MCF 10A (cell line): ENCODE measurements at regions of chr6 and their contacts with region 1.

Region 1: DNA sequence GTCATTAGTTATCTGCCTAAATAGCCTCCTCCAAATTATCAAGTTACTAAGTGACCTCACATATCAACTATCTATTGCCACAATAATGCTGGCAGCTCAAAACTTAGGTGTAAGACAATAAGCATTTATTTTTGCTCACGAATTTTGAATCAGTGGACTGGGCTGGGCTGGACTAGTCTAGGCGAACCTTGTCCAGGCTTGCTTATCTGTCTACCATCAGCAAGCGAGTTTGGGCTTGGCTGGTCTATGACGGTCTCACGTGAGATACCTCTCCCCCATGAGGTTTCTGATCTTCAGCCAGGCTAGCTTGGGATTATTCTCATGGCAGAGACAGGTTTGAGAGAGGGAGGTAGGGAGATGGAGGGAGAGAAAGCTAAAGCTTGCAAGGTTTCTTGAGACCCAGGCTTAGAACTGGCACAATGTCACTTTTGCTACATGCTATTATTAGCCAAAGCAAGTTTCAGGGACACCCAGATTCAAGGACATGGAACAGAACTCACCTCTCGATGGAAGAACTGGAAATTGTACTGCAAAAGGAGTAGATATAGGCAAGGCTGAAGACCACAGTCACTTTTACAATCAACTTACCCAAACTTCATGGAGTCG is 80.9 kb downstream of the WASF1 start:
- DNase-seq: peak; percentile 92
- H3K4me3 Mint-ChIP-seq: peak overlapping the region; percentile 47
- H3K27ac Mint-ChIP-seq: peak overlapping the region; percentile 85
- H3K4me1 Mint-ChIP-seq: peaks cover 47% of the 10 kb centered on the region
- H3K27me3 Mint-ChIP-seq: no peaks in the 10 kb centered on the region
- CTCF ChIP-seq: no peak

Region 2: GRCh38 chr6:110083875-110084585 is 14.6 kb before region 1 on chr6:
- CTCF ChIA-PET with region 1: interaction called, 5 read pairs
- POLR2A ChIA-PET with region 1: interaction called, 23 read pairs
- intact Hi-C with region 1: no loop called
- DNase-seq: no peak
- H3K4me3 Mint-ChIP-seq: no peak overlapping the region
- H3K27ac Mint-ChIP-seq: no peak overlapping the region
- H3K4me1 Mint-ChIP-seq: no peaks in the 10 kb centered on the region
- H3K27me3 Mint-ChIP-seq: no peaks in the 10 kb centered on the region
- CTCF ChIP-seq: no peak

Region 3: GRCh38 chr6:110250838-110251237 is 152.2 kb after region 1 on chr6:
- CTCF ChIA-PET with region 1: no interaction called
- POLR2A ChIA-PET with region 1: no interaction called
- intact Hi-C with region 1: no loop called
- DNase-seq: no peak
- H3K4me3 Mint-ChIP-seq: no peak overlapping the region
- H3K27ac Mint-ChIP-seq: no peak overlapping the region
- H3K4me1 Mint-ChIP-seq: no peaks in the 10 kb centered on the region
- H3K27me3 Mint-ChIP-seq: no peaks in the 10 kb centered on the region
- CTCF ChIP-seq: no peak

Region 4: GRCh38 chr6:110277100-110277665 is 178.6 kb after region 1 on chr6:
- CTCF ChIA-PET with region 1: no interaction called
- POLR2A ChIA-PET with region 1: no interaction called
- intact Hi-C with region 1: no loop called
- DNase-seq: no peak
- H3K4me3 Mint-ChIP-seq: no peak overlapping the region
- H3K27ac Mint-ChIP-seq: no peak overlapping the region
- H3K4me1 Mint-ChIP-seq: no peaks in the 10 kb centered on the region
- H3K27me3 Mint-ChIP-seq: peaks cover 31% of the 10 kb centered on the region
- CTCF ChIP-seq: no peak

Region 5: DNA sequence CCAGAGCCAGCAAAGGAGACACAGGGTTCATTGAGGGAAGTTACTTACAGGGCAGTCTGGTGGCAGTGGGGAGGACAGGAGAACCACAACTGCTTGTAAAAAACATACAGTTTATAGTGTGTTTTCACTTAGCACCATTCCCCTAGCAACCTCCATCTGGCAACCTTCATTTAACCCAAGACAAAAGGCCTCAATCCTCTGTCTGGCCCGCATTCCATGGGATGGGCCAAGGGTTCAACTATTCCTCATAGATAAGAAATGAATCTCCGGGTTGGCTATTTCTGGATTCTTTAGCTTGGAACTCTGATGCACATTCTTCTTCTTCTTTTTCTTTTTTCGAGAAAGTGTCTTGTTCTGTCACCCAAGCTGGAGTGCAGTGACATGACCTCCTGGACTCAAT is 1800.9 kb after region 1 on chr6:
- CTCF ChIA-PET with region 1: no interaction called
- POLR2A ChIA-PET with region 1: no interaction called
- intact Hi-C with region 1: no loop called
- DNase-seq: no peak
- H3K4me3 Mint-ChIP-seq: no peak overlapping the region
- H3K27ac Mint-ChIP-seq: no peak overlapping the region
- H3K4me1 Mint-ChIP-seq: no peaks in the 10 kb centered on the region
- H3K27me3 Mint-ChIP-seq: no peaks in the 10 kb centered on the region
- CTCF ChIP-seq: no peak